ENCODE measurements at regions of chr3 and their contacts with region 1.

Region 1: DNA sequence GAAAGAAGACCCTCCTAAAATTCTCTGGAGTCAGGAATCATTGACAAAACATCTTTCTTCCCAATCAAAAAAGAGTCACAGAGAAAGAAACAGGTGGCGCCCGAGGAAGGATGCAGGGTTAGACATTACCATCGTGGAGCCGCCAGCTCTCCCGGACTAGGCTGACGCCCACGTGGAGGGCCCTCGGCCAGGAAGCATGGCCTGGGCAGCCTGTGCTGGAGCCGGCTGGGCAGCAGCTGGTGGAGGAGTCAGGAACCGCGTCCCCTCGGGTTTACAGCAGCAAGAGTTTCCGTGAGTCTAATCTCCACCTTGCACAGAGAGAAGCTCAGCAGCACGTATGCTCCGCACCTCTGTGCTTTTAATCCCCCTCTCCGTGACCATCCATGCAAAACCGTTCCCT is 533.7 kb upstream of the ATP11B start:
- DNase-seq: no peak
- H3K4me3 ChIP-seq: no peak overlapping the region
- H3K27ac ChIP-seq: no peak overlapping the region
- H3K4me1 ChIP-seq: no peaks in the 10 kb centered on the region
- H3K27me3 ChIP-seq: peaks cover 0 to 19% of the 10 kb centered on the region in 2 donors
- CTCF ChIP-seq: no peak
- POLR2A ChIP-seq: no peak

Region 2: GRCh38 chr3:182246870-182247269 is 12.7 kb before region 1 on chr3:
- intact Hi-C with region 1: loop called (anchors 1 kb)
- DNase-seq: no peak
- H3K4me3 ChIP-seq: no peak overlapping the region
- H3K27ac ChIP-seq: no peak overlapping the region
- H3K4me1 ChIP-seq: no peaks in the 10 kb centered on the region
- H3K27me3 ChIP-seq: no peaks in the 10 kb centered on the region
- CTCF ChIP-seq: no peak
- POLR2A ChIP-seq: no peak

Measured in breast epithelium (tissue), 4 donors.